ENCODE measurements at regions of chr16 and their contacts with region 1.

Region 1: DNA sequence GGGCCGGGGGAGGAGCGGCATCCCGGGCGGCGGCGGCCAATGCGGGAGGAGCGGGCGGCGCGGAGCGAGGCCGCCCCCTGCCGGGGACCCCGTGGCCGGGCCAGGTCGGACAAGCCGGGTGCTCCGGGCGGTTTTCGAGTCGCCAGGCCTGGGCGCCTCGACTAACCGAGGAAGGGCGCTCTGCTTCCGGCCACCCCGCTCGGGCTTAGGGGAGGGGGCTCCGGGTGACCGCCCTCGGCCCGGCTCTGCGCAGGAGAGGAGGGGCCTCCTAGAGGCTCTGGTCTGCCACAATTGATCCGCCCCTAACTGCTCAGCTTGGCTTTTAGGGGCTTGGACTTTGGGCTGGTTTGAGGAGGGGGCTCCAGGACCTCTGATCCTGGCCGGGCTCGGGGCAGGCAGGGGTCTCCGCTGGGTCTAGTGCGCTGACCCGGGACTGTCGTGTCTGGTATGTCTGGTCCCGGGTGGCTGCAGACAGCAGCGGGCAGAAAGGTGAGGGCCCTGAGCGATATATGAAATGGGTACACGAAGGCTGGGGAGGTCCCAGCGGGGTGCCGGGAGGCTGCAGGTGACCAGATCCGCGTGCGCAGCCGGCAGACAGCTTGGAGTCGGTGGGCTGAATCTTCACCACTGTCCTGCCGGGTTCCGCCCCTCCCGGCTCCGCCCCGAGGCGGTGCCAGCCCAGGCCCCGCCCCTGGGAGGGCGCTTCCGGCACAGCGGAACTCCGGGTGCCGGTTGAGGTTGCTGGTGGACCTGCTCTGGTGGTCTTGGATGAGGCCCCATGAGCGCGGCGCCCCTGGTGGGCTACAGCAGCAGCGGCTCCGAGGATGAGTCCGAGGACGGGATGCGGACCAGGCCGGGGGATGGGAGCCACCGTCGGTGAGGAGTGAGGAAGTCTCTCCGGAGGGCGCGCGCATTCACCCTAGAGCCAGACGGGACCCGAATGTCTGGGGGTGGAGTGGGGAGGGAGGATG is at the start of gene USB1:
- DNase-seq: peak; percentile 89
- H3K4me3 ChIP-seq: peak within 1 kb of the TSS; percentile 85
- H3K27ac ChIP-seq: peak within 1 kb of the TSS; percentile 78
- H3K4me1 ChIP-seq: peaks cover 19% of the 10 kb centered on the region
- H3K27me3 ChIP-seq: no peaks in the 10 kb centered on the region
- CTCF ChIP-seq: peak; percentile 58
- total RNA-seq, gene USB1: 99.5 and 106 TPM in 2 replicates

Region 2: DNA sequence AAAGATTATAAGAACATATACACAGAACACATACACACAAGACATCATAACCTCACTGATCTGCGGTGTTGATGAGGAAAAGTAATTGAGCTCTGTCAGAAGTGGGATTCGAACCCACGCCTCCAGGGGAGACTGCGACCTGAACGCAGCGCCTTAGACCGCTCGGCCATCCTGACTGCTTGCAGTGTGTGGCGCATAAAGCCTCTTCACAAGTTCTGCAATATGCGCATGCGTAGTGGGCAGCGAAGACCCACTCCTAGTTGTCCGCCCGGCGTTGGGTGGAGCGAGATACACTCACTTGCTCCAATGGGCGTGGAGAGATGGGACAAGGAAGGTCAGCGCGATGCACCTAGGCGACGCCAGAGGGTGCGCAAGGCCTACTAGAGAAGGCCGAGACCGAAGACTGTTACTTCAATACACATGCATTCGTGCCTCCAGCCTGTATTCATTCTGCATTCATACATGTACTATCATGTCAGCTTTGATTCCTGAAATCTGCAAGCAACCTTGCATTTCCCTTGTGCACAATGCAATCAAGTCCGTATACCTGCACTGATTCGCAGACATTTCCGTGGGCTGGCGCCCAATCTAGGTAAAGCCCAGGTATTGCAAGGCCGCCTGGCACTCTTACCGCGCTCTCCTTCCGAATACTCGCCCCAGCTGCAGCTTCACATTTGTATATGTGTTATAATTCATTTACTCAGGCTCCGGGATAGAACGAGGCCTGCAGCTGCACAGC is 700.4 kb before region 1 on chr16:
- CTCF ChIA-PET with region 1: no interaction called
- POLR2A ChIA-PET with region 1: no interaction called
- intact Hi-C with region 1: no loop called
- DNase-seq: peak; percentile 99
- H3K4me3 ChIP-seq: peak overlapping the region; percentile 60
- H3K27ac ChIP-seq: peak overlapping the region; percentile 66
- H3K4me1 ChIP-seq: peaks cover 4% of the 10 kb centered on the region
- H3K27me3 ChIP-seq: no peaks in the 10 kb centered on the region
- CTCF ChIP-seq: peak; percentile 98

Region 3: DNA sequence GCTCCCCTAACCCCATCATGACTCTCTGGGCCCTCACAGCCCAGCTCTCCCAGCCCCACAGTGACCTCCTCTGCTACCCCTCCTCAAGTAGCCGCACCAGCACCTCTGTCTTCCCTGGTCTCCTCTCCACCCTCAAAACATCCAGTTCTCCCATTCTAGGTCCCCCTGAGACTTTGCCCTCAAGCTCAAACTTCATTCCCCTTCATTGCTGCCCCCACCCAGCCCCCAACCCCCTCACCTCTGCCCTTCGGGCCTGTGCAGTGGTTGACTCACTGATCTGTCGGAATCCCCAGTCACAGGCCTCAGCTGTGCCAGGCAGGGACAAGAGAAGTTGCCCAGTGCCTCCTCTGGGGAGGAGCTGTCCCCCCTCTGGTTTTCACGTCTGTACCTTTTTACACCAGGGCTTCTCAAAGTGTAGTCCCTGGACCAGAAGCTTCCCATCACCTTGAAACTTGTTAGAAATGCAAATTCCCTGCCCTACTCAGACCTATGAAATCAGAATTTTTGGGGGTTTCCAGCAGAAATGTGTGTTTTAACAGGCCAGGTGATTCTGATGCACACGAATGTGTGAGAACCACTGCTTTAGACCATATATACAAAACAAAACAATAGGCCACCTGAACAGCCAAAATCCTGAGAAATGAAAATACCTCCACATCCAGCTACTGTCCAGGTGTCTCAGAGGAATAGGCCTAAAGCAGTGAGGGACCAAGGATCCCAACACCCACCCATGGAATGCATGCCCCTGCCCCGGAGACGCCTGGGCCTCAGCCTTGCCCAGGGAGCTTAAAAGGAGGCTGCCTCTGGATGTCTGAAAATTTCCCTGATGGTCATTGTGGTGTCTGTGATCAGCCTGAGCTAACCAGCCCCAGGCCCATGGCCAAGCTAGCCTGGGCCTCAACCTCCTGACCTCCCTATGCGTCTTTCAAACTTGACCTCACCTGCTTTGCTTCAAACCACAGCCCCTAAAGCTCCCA is 513.8 kb before region 1 on chr16:
- CTCF ChIA-PET with region 1: interaction called, 14 read pairs
- POLR2A ChIA-PET with region 1: no interaction called
- intact Hi-C with region 1: no loop called
- DNase-seq: no peak
- H3K4me3 ChIP-seq: peak overlapping the region; percentile 71
- H3K27ac ChIP-seq: no peak overlapping the region
- H3K4me1 ChIP-seq: no peaks in the 10 kb centered on the region
- H3K27me3 ChIP-seq: no peaks in the 10 kb centered on the region
- CTCF ChIP-seq: no peak

Region 4: DNA sequence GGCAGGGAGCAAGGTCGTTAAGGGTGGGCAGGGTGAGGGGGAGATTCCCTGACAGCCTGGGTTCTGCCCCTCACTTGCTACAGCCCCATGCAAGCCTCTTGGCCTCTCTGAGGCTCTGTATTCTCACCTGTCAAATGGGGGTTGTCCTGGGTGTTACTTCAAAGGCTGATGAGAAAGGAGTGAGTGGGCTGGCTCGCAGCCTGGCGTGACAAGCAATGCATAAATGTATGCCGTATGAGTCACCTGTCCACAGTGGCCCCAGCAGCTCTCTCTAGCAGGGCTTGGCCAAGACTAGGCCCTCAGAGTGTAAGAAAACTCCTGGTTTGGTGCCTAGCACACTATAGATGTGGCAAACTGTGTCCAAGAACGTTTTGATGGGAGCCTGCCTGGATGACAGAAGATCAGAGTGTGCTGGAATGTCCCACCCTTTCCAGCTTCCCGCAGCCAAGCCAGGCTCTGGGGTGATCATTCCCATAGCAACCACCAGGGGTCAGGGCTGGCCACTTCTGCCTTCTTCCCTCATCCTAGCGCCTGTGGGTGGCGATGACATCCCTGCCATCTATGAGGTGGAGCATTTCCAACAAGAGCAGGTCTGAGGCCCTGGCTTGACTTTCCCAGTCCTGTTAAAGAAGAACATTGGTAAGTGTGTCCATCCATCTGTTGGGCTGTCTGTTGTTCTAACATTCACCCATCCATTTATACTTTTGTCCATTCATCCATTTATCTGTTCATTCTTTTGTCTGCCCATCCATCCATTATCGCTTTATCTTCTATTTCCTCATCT is 409.7 kb before region 1 on chr16:
- CTCF ChIA-PET with region 1: no interaction called
- POLR2A ChIA-PET with region 1: no interaction called
- intact Hi-C with region 1: loop called (anchors 5 kb)
- DNase-seq: peak; percentile 84
- H3K4me3 ChIP-seq: no peak overlapping the region
- H3K27ac ChIP-seq: no peak overlapping the region
- H3K4me1 ChIP-seq: peaks cover 10% of the 10 kb centered on the region
- H3K27me3 ChIP-seq: no peaks in the 10 kb centered on the region
- CTCF ChIP-seq: peak; percentile 95

Region 5: DNA sequence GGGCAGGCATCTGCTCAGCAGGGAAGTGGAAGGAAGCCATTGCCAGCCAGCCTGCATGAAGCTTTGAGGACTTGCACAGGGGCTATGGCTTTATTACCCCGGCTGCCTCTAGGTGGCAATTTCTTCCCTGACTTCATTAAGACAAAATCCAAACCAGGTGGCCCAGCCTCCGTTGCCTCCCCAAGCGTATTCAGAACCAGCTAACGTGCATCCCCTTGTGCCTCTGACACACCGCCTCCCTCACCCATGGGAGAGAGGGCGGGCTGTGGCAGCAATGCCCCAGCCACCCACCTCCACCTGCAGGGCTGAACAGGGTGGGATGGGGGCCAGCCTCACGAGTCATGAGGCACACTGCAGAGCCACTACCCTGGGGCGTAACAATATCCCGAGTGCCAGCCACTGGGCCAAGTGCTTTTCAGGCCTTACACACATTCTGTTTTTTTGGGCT is 205.5 kb before region 1 on chr16:
- CTCF ChIA-PET with region 1: no interaction called
- POLR2A ChIA-PET with region 1: no interaction called
- intact Hi-C with region 1: loop called (anchors 5 kb)
- DNase-seq: peak; percentile 89
- H3K4me3 ChIP-seq: no peak overlapping the region
- H3K27ac ChIP-seq: peak overlapping the region; percentile 94
- H3K4me1 ChIP-seq: peaks cover 34% of the 10 kb centered on the region
- H3K27me3 ChIP-seq: no peaks in the 10 kb centered on the region
- CTCF ChIP-seq: peak; percentile 65

Region 6: GRCh38 chr16:57906382-57907316 is 94.3 kb before region 1 on chr16:
- CTCF ChIA-PET with region 1: no interaction called
- POLR2A ChIA-PET with region 1: no interaction called
- intact Hi-C with region 1: loop called (anchors 1 kb)
- DNase-seq: no peak
- H3K4me3 ChIP-seq: no peak overlapping the region
- H3K27ac ChIP-seq: no peak overlapping the region
- H3K4me1 ChIP-seq: no peaks in the 10 kb centered on the region
- H3K27me3 ChIP-seq: no peaks in the 10 kb centered on the region
- CTCF ChIP-seq: peak; percentile 66